ENCODE measurements at regions of chr5 and their contacts with region 1.

Region 1: GRCh38 chr5:16465544-16466466 is at the start of gene ZNF622:
- DNase-seq: peak; percentile 92
- ATAC-seq: peak; percentile 96
- H3K4me3 ChIP-seq: peak within 1 kb of the TSS; percentile 90 to 98 (median 96)
- H3K4me3 Mint-ChIP-seq: peak within 1 kb of the TSS; percentile 96
- H3K27ac ChIP-seq: peak within 1 kb of the TSS; percentile 79 to 90
- H3K27ac Mint-ChIP-seq: peak within 1 kb of the TSS; percentile 94
- H3K4me1 ChIP-seq: peaks cover 41 to 43% of the 10 kb centered on the region in 2 donors
- H3K4me1 Mint-ChIP-seq: peaks cover 78% of the 10 kb centered on the region
- H3K27me3 ChIP-seq: no peaks in the 10 kb centered on the region
- H3K27me3 Mint-ChIP-seq: no peaks in the 10 kb centered on the region
- CTCF ChIP-seq: no peak
- total RNA-seq, gene ZNF622: 34.6 and 37.1 TPM in 2 replicates

Region 2: DNA sequence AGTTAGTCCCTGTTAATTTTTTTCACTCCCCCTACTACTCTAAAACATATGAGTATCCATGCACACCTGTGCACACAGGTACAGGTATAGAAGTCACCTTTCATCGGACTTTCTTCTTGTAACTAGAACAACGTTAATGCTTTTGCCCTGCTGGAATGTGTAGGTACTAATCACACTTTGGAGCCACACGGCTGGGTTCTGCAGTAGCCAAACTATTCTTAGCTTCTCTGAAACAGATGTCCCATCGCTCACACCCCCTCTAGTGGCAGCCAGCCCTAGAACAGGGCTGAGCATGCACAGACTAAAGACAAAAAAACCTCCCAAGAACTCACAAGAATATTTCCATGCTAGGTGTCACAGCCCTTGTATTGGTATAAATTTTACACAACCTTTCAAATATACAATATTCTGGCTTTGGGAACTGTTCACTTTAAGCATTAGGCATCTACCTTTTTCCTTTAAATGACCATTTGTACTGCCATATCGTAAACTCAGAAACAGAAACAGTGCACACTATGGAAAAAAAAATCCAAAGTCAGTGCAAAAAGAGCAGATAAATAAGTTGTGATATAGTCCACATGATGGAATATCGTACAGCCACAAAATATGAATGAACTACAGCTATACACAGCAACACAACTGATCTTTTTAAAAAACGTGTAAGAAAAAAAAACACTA is 87.0 kb after region 1 on chr5:
- CTCF ChIA-PET with region 1: no interaction called
- POLR2A ChIA-PET with region 1: no interaction called
- intact Hi-C with region 1: loop called (anchors 5 kb)
- DNase-seq: peak; percentile 59
- ATAC-seq: peak; percentile 60
- H3K4me3 ChIP-seq: no peak overlapping the region
- H3K4me3 Mint-ChIP-seq: no peak overlapping the region
- H3K27ac ChIP-seq: no peak overlapping the region
- H3K27ac Mint-ChIP-seq: no peak overlapping the region
- H3K4me1 ChIP-seq: peaks cover 9 to 15% of the 10 kb centered on the region in 2 donors
- H3K4me1 Mint-ChIP-seq: peaks cover 28% of the 10 kb centered on the region
- H3K27me3 ChIP-seq: no peaks in the 10 kb centered on the region
- H3K27me3 Mint-ChIP-seq: no peaks in the 10 kb centered on the region
- CTCF ChIP-seq: peak; percentile 73

Region 3: GRCh38 chr5:16616536-16617273 is 150.9 kb after region 1 on chr5 and contains the start of gene RETREG1:
- CTCF ChIA-PET with region 1: no interaction called
- POLR2A ChIA-PET with region 1: no interaction called
- intact Hi-C with region 1: loop called (anchors 2 kb)
- DNase-seq: peak; percentile 85
- ATAC-seq: peak; percentile 87
- H3K4me3 ChIP-seq: peak within 1 kb of the TSS; percentile 19 to 80 (median 65)
- H3K4me3 Mint-ChIP-seq: peak within 1 kb of the TSS; percentile 93
- H3K27ac ChIP-seq: peak within 1 kb of the TSS; percentile 84 to 91
- H3K27ac Mint-ChIP-seq: peak within 1 kb of the TSS; percentile 90
- H3K4me1 ChIP-seq: peaks cover 18 to 20% of the 10 kb centered on the region in 2 donors
- H3K4me1 Mint-ChIP-seq: peaks cover 15% of the 10 kb centered on the region
- H3K27me3 ChIP-seq: peaks cover 0 to 3% (median 0%) of the 10 kb centered on the region in 4 experiments
- H3K27me3 Mint-ChIP-seq: peaks cover 9% of the 10 kb centered on the region
- CTCF ChIP-seq: no peak
- total RNA-seq, gene RETREG1: 11.4 and 12.9 TPM in 2 replicates